Panc1 (cell line): ENCODE measurements at regions of chr1 and their contacts with region 1.

Region 1: GRCh38 chr1:187465386-187465785 is 636.6 kb downstream of the PLA2G4A start:
- DNase-seq: no peak
- ATAC-seq: no peak
- H3K4me3 ChIP-seq: no peak overlapping the region
- H3K27ac ChIP-seq: no peak overlapping the region
- H3K4me1 ChIP-seq: no peaks in the 10 kb centered on the region
- H3K27me3 ChIP-seq: no peaks in the 10 kb centered on the region
- CTCF ChIP-seq: no peak

Region 2: DNA sequence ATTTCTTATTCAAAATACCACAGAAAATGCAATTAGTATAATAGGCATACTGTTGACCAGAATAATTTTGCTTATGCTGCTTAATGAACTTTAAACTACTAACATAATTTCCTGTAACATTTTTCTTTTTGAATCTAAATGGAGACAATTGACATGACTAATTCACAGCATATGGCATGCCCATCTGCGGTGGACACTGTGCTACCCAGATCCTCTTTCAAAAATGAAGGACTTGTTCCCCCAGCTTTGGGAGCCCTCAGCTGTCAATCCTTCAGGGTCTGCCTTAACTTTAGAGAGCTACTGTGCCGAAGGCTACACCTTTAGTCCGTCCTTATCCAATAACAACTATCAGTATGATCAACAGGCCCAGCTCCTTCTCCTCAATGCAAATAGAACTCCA is 152.4 kb after region 1 on chr1:
- CTCF ChIA-PET with region 1: no interaction called
- POLR2A ChIA-PET with region 1: interaction called, 12 read pairs
- in situ Hi-C with region 1: no loop called
- intact Hi-C with region 1: no loop called
- DNase-seq: no peak
- ATAC-seq: no peak
- H3K4me3 ChIP-seq: no peak overlapping the region
- H3K27ac ChIP-seq: no peak overlapping the region
- H3K4me1 ChIP-seq: no peaks in the 10 kb centered on the region
- H3K27me3 ChIP-seq: no peaks in the 10 kb centered on the region
- CTCF ChIP-seq: no peak

Region 3: DNA sequence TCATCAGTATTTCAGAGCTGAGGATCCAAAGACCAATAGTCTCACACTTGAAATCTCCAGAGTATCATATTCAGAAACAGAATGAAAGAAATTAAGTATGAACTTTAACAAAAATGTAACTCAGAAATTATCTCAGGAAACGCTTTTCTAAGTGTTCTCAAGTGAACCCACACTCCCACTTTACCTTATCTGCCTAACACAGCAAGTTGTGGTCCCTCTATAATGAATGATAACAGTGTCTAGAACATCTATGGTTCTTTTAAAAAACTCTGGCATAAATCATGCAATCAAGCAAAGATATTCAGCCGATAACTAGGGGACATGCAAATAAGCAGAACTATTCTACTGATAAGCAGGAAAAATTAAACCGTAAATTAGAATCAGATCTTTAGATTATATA is 937.6 kb after region 1 on chr1:
- CTCF ChIA-PET with region 1: no interaction called
- POLR2A ChIA-PET with region 1: no interaction called
- in situ Hi-C with region 1: no loop called
- intact Hi-C with region 1: no loop called
- DNase-seq: no peak
- ATAC-seq: no peak
- H3K4me3 ChIP-seq: no peak overlapping the region
- H3K27ac ChIP-seq: no peak overlapping the region
- H3K4me1 ChIP-seq: no peaks in the 10 kb centered on the region
- H3K27me3 ChIP-seq: no peaks in the 10 kb centered on the region
- CTCF ChIP-seq: no peak